CD8-positive, alpha-beta T cell (primary cell): ENCODE measurements at regions of chr12 and their contacts with region 1.

Region 1: DNA sequence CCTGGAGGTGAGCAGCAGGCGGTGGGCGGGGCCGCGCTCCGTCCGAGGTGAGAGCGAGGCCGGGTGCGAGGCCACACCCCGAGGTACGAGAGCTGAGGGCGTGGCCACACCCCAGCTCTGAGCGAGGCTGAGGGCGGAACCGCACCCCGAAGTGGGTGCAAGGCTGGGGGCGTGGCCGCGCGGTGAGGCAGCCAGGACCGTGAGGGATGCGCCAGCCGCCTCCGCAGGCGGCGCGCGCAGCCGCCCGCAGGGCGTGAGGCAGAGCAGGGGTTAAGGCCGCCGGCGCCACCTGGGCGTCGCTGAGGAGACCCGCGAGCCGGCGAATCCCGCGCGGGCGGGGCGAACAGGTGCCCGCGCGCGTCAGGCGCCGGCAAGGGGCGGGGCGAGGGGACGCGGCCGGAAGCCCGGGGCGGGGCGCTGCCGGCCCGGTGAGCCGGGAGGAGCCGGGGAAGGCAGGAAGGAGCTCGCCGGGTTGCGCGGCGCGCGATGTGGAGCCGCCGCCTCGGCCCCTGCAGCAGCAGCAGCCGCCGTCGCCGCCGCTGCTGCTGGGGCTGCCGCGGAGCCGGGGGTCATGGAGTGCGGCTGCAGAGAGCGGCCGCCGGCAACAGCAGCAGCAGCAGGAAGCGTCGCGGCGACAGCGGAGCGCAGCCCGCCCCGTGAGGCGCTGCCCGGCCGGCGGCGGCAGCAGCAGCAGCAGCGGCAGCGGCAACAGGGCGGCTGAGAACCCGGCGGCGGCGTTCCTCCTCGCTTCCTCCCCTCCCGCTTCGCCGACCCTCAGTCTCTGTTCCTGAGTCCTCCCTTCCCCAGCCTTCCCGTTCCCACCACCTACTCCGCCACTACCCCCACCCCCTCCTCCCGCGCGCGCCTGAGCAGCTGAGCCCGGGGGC is at the start of gene BICDL1:
- DNase-seq: peak; percentile 94 to 99 (median 97)
- ATAC-seq: peak; percentile 87
- H3K4me3 ChIP-seq: peak within 1 kb of the TSS; percentile 54 to 63
- H3K4me3 Mint-ChIP-seq: peak within 1 kb of the TSS; percentile 88
- H3K27ac ChIP-seq: peak within 1 kb of the TSS; percentile 58 to 82
- H3K27ac Mint-ChIP-seq: peak within 1 kb of the TSS; percentile 97
- H3K4me1 ChIP-seq: peaks cover 22% of the 10 kb centered on the region
- H3K4me1 Mint-ChIP-seq: peaks cover 35% of the 10 kb centered on the region
- H3K27me3 ChIP-seq: no peaks in the 10 kb centered on the region
- H3K27me3 Mint-ChIP-seq: no peaks in the 10 kb centered on the region
- CTCF ChIP-seq: peak; percentile 14
- total RNA-seq, gene BICDL1: 138 to 154 TPM

Region 2: DNA sequence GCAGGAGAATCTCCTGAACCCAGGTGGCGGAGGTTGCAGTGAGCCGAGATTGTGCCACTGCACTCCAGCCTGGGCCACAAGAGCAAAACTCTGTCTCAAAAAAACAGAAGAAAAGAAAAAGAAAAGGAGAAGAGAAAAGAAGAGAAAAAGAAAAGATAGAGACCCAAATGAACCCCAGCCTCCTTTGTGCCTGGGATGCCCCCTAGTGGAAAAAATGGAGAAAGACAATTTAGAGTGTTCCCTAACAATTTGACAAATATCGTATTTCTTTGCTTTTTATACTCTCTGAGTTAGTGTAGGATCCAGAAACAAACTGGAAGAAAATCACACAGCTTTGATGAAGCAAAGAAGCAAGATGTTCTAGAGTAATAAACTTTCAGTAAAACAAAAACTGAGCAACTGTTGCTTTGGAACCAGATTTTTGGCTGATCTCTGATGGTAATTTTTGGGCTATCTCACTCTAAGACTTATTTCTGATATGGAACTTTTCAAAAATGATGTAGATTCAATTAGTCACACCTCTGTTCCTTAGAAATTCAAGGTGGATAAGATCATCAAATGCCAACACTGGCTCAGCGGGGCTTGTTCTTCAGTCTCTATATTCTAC is 339.7 kb before region 1 on chr12:
- CTCF ChIA-PET with region 1: no interaction called
- POLR2A ChIA-PET with region 1: no interaction called
- intact Hi-C with region 1: no loop called
- DNase-seq: peak in 2 of 9 experiments; percentile 29 to 40
- ATAC-seq: no peak
- H3K4me3 ChIP-seq: no peak overlapping the region
- H3K4me3 Mint-ChIP-seq: no peak overlapping the region
- H3K27ac ChIP-seq: no peak overlapping the region
- H3K27ac Mint-ChIP-seq: no peak overlapping the region
- H3K4me1 ChIP-seq: no peaks in the 10 kb centered on the region
- H3K4me1 Mint-ChIP-seq: no peaks in the 10 kb centered on the region
- H3K27me3 ChIP-seq: no peaks in the 10 kb centered on the region
- H3K27me3 Mint-ChIP-seq: peaks cover 13% of the 10 kb centered on the region
- CTCF ChIP-seq: peak; percentile 72

Region 3: GRCh38 chr12:119876761-119877638 is 112.0 kb before region 1 on chr12 and contains the start of gene CIT:
- CTCF ChIA-PET with region 1: no interaction called
- POLR2A ChIA-PET with region 1: no interaction called
- intact Hi-C with region 1: loop called in 1 of 2 experiments (anchors 2 kb)
- DNase-seq: peak; percentile 64 to 93 (median 83)
- ATAC-seq: peak; percentile 99
- H3K4me3 ChIP-seq: peak within 1 kb of the TSS; percentile 83 to 88
- H3K4me3 Mint-ChIP-seq: peak within 1 kb of the TSS; percentile 86
- H3K27ac ChIP-seq: no peak within 1 kb of the TSS
- H3K27ac Mint-ChIP-seq: peak within 1 kb of the TSS; percentile 53
- H3K4me1 ChIP-seq: no peaks in the 10 kb centered on the region
- H3K4me1 Mint-ChIP-seq: peaks cover 10% of the 10 kb centered on the region
- H3K27me3 ChIP-seq: no peaks in the 10 kb centered on the region
- H3K27me3 Mint-ChIP-seq: no peaks in the 10 kb centered on the region
- CTCF ChIP-seq: no peak
- total RNA-seq, gene CIT: 0.84 to 1.6 TPM

Region 4: DNA sequence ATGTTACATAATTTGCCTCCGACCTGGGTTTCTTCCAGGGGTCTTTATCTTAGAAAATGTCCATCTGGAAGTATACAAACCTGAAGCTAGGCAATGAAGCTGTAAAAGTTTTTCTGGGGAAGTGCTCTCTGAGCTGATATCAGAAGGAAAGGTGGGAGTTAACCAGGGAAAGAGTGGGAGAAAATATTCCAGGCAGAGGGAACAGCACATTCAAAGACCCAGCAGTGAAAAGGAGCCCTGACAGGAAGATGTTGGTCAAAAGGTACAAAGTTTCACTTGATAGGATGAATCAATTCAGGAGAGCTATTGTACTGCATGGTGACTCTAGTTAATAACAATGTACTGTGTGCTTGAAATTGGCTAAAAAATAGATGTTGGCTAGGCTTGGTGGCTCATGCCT is 94.1 kb before region 1 on chr12:
- CTCF ChIA-PET with region 1: no interaction called
- POLR2A ChIA-PET with region 1: no interaction called
- intact Hi-C with region 1: no loop called
- DNase-seq: no peak
- ATAC-seq: no peak
- H3K4me3 ChIP-seq: no peak overlapping the region
- H3K4me3 Mint-ChIP-seq: no peak overlapping the region
- H3K27ac ChIP-seq: no peak overlapping the region
- H3K27ac Mint-ChIP-seq: no peak overlapping the region
- H3K4me1 ChIP-seq: no peaks in the 10 kb centered on the region
- H3K4me1 Mint-ChIP-seq: no peaks in the 10 kb centered on the region
- H3K27me3 ChIP-seq: no peaks in the 10 kb centered on the region
- H3K27me3 Mint-ChIP-seq: peaks cover 4% of the 10 kb centered on the region
- CTCF ChIP-seq: no peak

Region 5: GRCh38 chr12:120012067-120012621 is 23.1 kb after region 1 on chr12:
- CTCF ChIA-PET with region 1: interaction called, 19 read pairs
- POLR2A ChIA-PET with region 1: interaction called, 35 read pairs
- intact Hi-C with region 1: loop called (anchors 1 kb)
- DNase-seq: peak in 8 of 9 experiments; percentile 23 to 97 (median 71)
- ATAC-seq: peak; percentile 61
- H3K4me3 ChIP-seq: no peak overlapping the region
- H3K4me3 Mint-ChIP-seq: peak overlapping the region; percentile 76
- H3K27ac ChIP-seq: peak overlapping the region; percentile 52 to 73
- H3K27ac Mint-ChIP-seq: peak overlapping the region; percentile 99
- H3K4me1 ChIP-seq: peaks cover 69% of the 10 kb centered on the region
- H3K4me1 Mint-ChIP-seq: peaks cover 83% of the 10 kb centered on the region
- H3K27me3 ChIP-seq: no peaks in the 10 kb centered on the region
- H3K27me3 Mint-ChIP-seq: no peaks in the 10 kb centered on the region
- CTCF ChIP-seq: no peak

Region 6: DNA sequence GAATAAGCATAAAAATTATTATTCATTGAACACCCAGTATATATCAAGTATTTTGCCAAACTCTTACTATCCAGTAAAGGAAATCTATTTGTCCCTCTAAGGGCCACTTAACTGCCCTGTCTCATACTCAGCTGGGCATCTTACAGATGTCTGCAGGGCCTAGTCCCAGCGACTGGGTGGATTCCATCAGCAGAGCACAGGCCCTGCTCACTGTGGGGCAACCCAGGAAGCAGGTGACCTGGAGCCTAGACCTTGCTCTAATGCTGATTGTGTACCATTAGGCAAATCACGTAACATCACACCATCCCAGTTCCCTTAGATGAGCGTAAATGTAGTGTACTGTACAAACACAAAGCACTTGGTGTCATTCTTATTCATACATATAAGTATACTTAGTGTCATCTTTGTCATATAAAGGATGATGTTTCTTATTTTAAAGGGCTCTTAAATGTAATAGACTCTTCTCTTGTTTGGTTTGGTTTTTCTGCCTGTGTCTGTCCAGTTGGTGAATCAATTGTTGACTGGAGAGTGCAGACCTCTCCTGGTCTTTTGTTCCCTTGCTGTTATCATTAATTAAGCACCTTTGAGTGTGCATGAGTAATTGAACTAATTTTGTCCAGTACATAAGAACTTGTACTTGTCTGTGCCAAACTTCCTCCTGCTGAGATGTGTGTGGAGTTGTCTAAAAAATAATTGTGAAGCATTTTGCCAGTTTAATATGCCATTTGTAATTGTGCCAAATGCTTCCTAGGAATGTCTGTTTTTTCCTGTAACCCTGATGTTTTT is 78.3 kb after region 1 on chr12:
- CTCF ChIA-PET with region 1: no interaction called
- POLR2A ChIA-PET with region 1: interaction called, 4 read pairs
- intact Hi-C with region 1: loop called in 1 of 2 experiments (anchors 5 kb)
- DNase-seq: no peak
- ATAC-seq: no peak
- H3K4me3 ChIP-seq: no peak overlapping the region
- H3K4me3 Mint-ChIP-seq: no peak overlapping the region
- H3K27ac ChIP-seq: no peak overlapping the region
- H3K27ac Mint-ChIP-seq: peak overlapping the region; percentile 16
- H3K4me1 ChIP-seq: no peaks in the 10 kb centered on the region
- H3K4me1 Mint-ChIP-seq: no peaks in the 10 kb centered on the region
- H3K27me3 ChIP-seq: no peaks in the 10 kb centered on the region
- H3K27me3 Mint-ChIP-seq: no peaks in the 10 kb centered on the region
- CTCF ChIP-seq: no peak

Region 7: GRCh38 chr12:120100435-120101029 is 111.5 kb after region 1 on chr12:
- CTCF ChIA-PET with region 1: no interaction called
- POLR2A ChIA-PET with region 1: no interaction called
- intact Hi-C with region 1: no loop called
- DNase-seq: no peak
- ATAC-seq: no peak
- H3K4me3 ChIP-seq: no peak overlapping the region
- H3K4me3 Mint-ChIP-seq: no peak overlapping the region
- H3K27ac ChIP-seq: peak overlapping the region in 1 of 2 experiments; percentile 28
- H3K27ac Mint-ChIP-seq: no peak overlapping the region
- H3K4me1 ChIP-seq: peaks cover 10% of the 10 kb centered on the region
- H3K4me1 Mint-ChIP-seq: peaks cover 20% of the 10 kb centered on the region
- H3K27me3 ChIP-seq: no peaks in the 10 kb centered on the region
- H3K27me3 Mint-ChIP-seq: no peaks in the 10 kb centered on the region
- CTCF ChIP-seq: no peak

Region 8: GRCh38 chr12:120194534-120195395 is 205.7 kb after region 1 on chr12 and contains the start of gene GCN1:
- CTCF ChIA-PET with region 1: no interaction called
- POLR2A ChIA-PET with region 1: interaction called, 5 read pairs
- intact Hi-C with region 1: loop called in 1 of 2 experiments (anchors 5 kb)
- DNase-seq: peak; percentile 76 to 94 (median 88)
- ATAC-seq: peak; percentile 86
- H3K4me3 ChIP-seq: peak within 1 kb of the TSS; percentile 67 to 72
- H3K4me3 Mint-ChIP-seq: peak within 1 kb of the TSS; percentile 82
- H3K27ac ChIP-seq: peak within 1 kb of the TSS; percentile 73 to 88
- H3K27ac Mint-ChIP-seq: peak within 1 kb of the TSS; percentile 95
- H3K4me1 ChIP-seq: peaks cover 36% of the 10 kb centered on the region
- H3K4me1 Mint-ChIP-seq: peaks cover 44% of the 10 kb centered on the region
- H3K27me3 ChIP-seq: no peaks in the 10 kb centered on the region
- H3K27me3 Mint-ChIP-seq: no peaks in the 10 kb centered on the region
- CTCF ChIP-seq: no peak
- total RNA-seq, gene GCN1: 161 to 163 TPM